GM12878 (cell line): ENCODE measurements at regions of chr1 and their contacts with region 1.

Region 1: DNA sequence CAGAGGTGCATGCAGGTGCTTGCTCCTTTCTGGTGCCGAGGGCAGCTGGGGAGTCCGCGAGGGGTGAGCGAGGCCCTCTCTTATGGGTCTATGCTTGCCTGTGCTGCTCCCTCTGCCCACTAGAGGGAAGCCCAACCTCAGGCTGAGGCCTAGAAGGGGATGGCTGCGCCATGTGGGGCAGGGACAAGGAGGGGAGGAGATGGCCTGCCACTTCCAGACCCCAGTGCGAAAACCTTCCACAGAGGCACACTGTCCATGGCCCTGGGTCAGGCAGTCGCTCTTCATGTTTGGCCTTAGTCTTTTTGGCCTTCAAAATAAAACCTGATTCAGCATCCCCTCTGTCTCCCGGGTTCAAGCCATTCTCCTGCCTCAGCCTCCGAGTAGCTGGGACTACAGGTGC is 14.0 kb downstream of the RHBG start:
- DNase-seq: no peak
- ATAC-seq: peak; percentile 98
- H3K4me3 ChIP-seq: no peak overlapping the region
- H3K27ac ChIP-seq: no peak overlapping the region
- H3K4me1 ChIP-seq: no peaks in the 10 kb centered on the region
- H3K27me3 ChIP-seq: peaks cover 2 to 5% of the 10 kb centered on the region in 2 experiments
- CTCF ChIP-seq: peak; percentile 92 to 98 (median 93)
- EP300 ChIP-seq: no peak
- POLR2A ChIP-seq: no peak
- RAD21 ChIP-seq: peak; percentile 91

Region 2: GRCh38 chr1:155844860-155845421 is 538.1 kb before region 1 on chr1:
- CTCF ChIA-PET with region 1: no interaction called
- POLR2A ChIA-PET with region 1: no interaction called
- RAD21 ChIA-PET with region 1: no interaction called
- SMC1A ChIA-PET with region 1: no interaction called
- in situ Hi-C with region 1: no loop called
- intact Hi-C with region 1: no loop called
- DNase-seq: no peak
- ATAC-seq: no peak
- H3K4me3 ChIP-seq: no peak overlapping the region
- H3K27ac ChIP-seq: no peak overlapping the region
- H3K4me1 ChIP-seq: no peaks in the 10 kb centered on the region; the same call in 1 of the 2 replicates
- H3K27me3 ChIP-seq: no peaks in the 10 kb centered on the region
- CTCF ChIP-seq: no peak
- EP300 ChIP-seq: no peak
- POLR2A ChIP-seq: no peak
- RAD21 ChIP-seq: no peak

Region 3: GRCh38 chr1:156193488-156194299 is 189.3 kb before region 1 on chr1 and contains the start of gene SLC25A44:
- CTCF ChIA-PET with region 1: no interaction called
- POLR2A ChIA-PET with region 1: no interaction called
- RAD21 ChIA-PET with region 1: no interaction called
- SMC1A ChIA-PET with region 1: no interaction called
- in situ Hi-C with region 1: no loop called
- intact Hi-C with region 1: no loop called
- DNase-seq: peak; percentile 100
- ATAC-seq: peak; percentile 96
- H3K4me3 ChIP-seq: peak within 1 kb of the TSS; percentile 100
- H3K27ac ChIP-seq: peak within 1 kb of the TSS; percentile 87
- H3K4me1 ChIP-seq: peaks cover 6% of the 10 kb centered on the region
- H3K27me3 ChIP-seq: no peaks in the 10 kb centered on the region
- CTCF ChIP-seq: peak; percentile 35 to 48 (median 45); a peak in 5 of 6 replicates
- EP300 ChIP-seq: no peak
- POLR2A ChIP-seq: peak; percentile 89
- RAD21 ChIP-seq: no peak
- polyA plus RNA-seq, gene SLC25A44: 7.1 to 9.2 TPM

Region 4: DNA sequence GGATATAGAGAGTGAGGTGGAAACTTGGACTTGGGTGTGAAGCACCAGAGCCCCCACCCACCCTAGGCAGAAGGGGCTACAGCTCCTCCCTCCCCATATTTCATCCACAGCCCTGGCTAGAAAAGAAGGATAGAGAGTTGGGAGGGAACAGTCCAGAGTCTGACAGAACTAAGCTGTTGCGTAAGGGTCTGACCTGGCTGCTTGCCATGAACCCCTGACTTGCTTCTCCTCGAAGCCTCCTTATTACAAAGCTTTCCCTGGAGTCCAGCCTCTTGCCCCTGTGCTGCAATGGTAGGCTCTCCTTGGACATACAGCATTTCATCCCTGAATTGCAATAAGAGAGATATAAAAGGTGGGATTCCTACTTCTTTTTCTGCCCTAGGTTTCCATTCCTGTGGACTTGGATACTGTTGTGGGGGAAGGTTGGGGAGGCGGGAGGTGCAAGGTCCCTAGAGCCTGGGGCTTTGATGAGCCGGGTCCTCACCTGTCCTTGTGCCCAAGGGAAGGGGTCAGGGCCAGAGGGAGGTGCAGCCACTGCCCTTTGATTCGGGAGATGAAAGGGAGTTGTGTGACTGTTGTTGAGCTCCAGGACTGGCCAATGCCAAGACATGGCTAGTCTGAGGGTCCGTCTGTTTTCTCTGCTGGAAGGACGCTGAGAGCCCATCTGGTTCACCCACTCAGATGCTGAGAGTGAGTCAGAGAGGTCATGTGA is 11.3 kb before region 1 on chr1:
- CTCF ChIA-PET with region 1: interaction called, 19 read pairs
- POLR2A ChIA-PET with region 1: interaction called, 4 read pairs
- RAD21 ChIA-PET with region 1: no interaction called
- SMC1A ChIA-PET with region 1: interaction called, 8 read pairs
- in situ Hi-C with region 1: no loop called
- intact Hi-C with region 1: no loop called
- DNase-seq: no peak
- ATAC-seq: no peak
- H3K4me3 ChIP-seq: no peak overlapping the region
- H3K27ac ChIP-seq: no peak overlapping the region
- H3K4me1 ChIP-seq: no peaks in the 10 kb centered on the region
- H3K27me3 ChIP-seq: peaks cover 3 to 10% of the 10 kb centered on the region in 2 experiments; a peak in 3 of 4 replicates
- CTCF ChIP-seq: no peak
- EP300 ChIP-seq: no peak
- POLR2A ChIP-seq: no peak
- RAD21 ChIP-seq: no peak

Region 5: GRCh38 chr1:156409439-156409838 is 26.4 kb after region 1 on chr1:
- CTCF ChIA-PET with region 1: interaction called, 13 read pairs
- POLR2A ChIA-PET with region 1: no interaction called
- RAD21 ChIA-PET with region 1: interaction called, 3 read pairs
- SMC1A ChIA-PET with region 1: interaction called, 11 read pairs
- in situ Hi-C with region 1: no loop called
- intact Hi-C with region 1: no loop called
- DNase-seq: no peak
- ATAC-seq: no peak
- H3K4me3 ChIP-seq: no peak overlapping the region
- H3K27ac ChIP-seq: no peak overlapping the region
- H3K4me1 ChIP-seq: no peaks in the 10 kb centered on the region
- H3K27me3 ChIP-seq: peaks cover 0 to 3% of the 10 kb centered on the region in 2 experiments; a peak in 1 of 4 replicates
- CTCF ChIP-seq: no peak
- EP300 ChIP-seq: no peak
- POLR2A ChIP-seq: no peak
- RAD21 ChIP-seq: no peak

Region 6: DNA sequence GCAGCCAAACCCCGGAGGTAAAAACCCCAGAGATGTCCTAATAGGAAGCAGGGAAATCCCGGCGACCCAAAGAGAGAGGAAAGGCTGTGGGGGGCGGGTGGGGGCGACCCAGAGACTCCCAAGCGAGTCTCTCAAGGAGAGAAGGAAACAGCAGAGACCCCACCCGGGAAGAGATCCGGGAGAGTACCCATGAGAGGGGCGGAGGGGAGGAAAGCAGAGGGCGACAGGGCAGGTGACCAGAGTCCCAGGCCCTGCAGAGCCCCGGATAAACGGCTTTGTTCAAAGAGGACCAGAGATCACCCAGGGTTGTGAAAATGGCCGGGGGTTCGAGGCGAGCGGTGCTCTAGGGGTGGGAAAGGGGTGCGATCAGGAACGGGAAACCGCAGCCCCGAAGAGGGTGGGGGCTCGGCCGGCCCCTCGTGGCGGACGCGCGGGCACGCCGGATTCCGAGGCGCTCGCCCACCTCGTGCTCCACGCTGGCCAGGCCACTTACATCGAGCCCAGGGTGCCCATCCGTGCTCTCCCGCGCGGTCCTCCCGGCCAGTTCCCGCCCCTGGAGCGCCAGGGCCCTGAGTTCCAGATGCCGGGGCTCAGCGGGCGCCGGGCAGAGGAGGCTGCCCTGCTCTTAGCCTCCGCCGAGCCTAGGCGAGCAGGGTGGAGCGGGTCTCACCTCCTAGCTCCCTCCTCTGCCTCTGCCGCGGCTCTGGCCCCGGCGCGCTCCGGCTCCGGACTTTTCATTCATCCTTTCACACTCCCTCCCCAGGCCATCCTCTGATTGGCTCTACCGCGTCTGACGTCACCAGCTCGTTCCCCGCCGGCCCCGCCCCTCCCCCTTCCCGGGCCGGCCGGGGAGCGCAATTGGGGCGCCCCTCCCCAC is 38.3 kb after region 1 on chr1:
- CTCF ChIA-PET with region 1: interaction called, 26 read pairs
- POLR2A ChIA-PET with region 1: no interaction called
- RAD21 ChIA-PET with region 1: interaction called, 21 read pairs
- SMC1A ChIA-PET with region 1: interaction called, 23 read pairs
- in situ Hi-C with region 1: no loop called
- intact Hi-C with region 1: no loop called
- DNase-seq: peak; percentile 39
- ATAC-seq: peak; percentile 88
- H3K4me3 ChIP-seq: peak overlapping the region; percentile 75
- H3K27ac ChIP-seq: peak overlapping the region; percentile 33; the same call in 1 of the 2 replicates
- H3K4me1 ChIP-seq: peaks cover 8% of the 10 kb centered on the region
- H3K27me3 ChIP-seq: peaks cover 6 to 13% of the 10 kb centered on the region in 2 experiments
- CTCF ChIP-seq: no peak
- EP300 ChIP-seq: no peak
- POLR2A ChIP-seq: peak; percentile 82
- RAD21 ChIP-seq: no peak

Region 7: DNA sequence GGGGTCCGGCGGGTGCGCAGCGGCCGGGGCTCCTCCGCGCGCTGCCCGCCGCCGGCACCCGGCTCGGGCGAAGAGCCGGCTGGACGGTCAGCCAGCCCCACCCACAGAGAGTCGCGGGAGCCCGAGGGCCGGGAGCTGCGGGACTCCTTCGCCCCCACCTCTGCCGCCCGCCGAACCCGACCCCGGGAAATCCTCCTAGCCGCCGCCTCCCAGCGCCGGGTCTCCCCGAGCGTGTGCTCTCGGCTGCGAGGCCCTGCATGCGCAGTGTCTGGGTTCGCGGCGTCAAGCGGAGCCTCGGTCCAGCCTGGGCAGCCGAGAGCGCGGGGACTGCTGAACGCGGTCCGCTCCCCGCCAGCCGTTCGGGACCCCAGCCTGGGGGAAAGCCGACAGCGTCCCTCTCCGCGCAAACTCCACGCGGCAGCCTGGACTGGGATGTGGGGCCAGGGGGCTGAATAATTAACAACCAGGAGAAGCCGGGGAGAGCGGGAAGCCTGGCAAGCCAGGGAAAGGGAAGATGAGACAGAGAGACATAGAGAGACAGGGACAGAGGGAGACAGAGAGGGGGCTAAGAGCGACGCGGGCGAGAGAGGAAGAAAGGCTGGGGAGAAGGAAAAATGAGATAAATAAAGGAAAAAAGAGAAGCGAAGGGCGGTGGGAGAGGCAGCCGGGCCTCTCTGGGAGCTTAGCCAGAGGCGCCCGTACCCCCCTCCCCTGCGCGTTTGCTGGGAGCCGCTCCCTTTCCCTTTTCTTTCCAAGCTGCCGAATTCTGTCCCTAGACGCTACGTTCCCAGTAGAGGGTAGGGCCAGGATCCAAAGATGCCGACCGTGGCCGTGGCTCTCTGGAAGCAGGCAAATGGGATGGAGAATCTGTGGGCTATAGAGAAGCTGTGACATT is 53.4 kb after region 1 on chr1:
- CTCF ChIA-PET with region 1: interaction called, 468 read pairs
- POLR2A ChIA-PET with region 1: interaction called, 3 read pairs
- RAD21 ChIA-PET with region 1: interaction called, 50 read pairs
- SMC1A ChIA-PET with region 1: interaction called, 63 read pairs
- in situ Hi-C with region 1: loop called (anchors 5 kb)
- intact Hi-C with region 1: no loop called
- DNase-seq: no peak
- ATAC-seq: no peak
- H3K4me3 ChIP-seq: peak overlapping the region; percentile 48; the same call in 1 of the 2 replicates
- H3K27ac ChIP-seq: no peak overlapping the region
- H3K4me1 ChIP-seq: no peaks in the 10 kb centered on the region; the same call in none of the 2 replicates
- H3K27me3 ChIP-seq: peaks cover 36 to 67% of the 10 kb centered on the region in 2 experiments
- CTCF ChIP-seq: no peak
- EP300 ChIP-seq: no peak
- POLR2A ChIP-seq: no peak
- RAD21 ChIP-seq: no peak

Region 8: GRCh38 chr1:156534424-156535060 is 151.5 kb after region 1 on chr1:
- CTCF ChIA-PET with region 1: no interaction called
- POLR2A ChIA-PET with region 1: no interaction called
- RAD21 ChIA-PET with region 1: no interaction called
- SMC1A ChIA-PET with region 1: no interaction called
- in situ Hi-C with region 1: no loop called
- intact Hi-C with region 1: no loop called
- DNase-seq: no peak
- ATAC-seq: no peak
- H3K4me3 ChIP-seq: no peak overlapping the region
- H3K27ac ChIP-seq: no peak overlapping the region
- H3K4me1 ChIP-seq: no peaks in the 10 kb centered on the region
- H3K27me3 ChIP-seq: no peaks in the 10 kb centered on the region
- CTCF ChIP-seq: no peak
- EP300 ChIP-seq: no peak
- POLR2A ChIP-seq: no peak
- RAD21 ChIP-seq: no peak

Region 9: GRCh38 chr1:156608036-156608674 is 225.1 kb after region 1 on chr1:
- CTCF ChIA-PET with region 1: interaction called, 23 read pairs
- POLR2A ChIA-PET with region 1: interaction called, 4 read pairs
- RAD21 ChIA-PET with region 1: interaction called, 7 read pairs
- SMC1A ChIA-PET with region 1: interaction called, 11 read pairs
- in situ Hi-C with region 1: loop called (anchors 5 kb)
- intact Hi-C with region 1: loop called (anchors 2 kb)
- DNase-seq: peak; percentile 62
- ATAC-seq: peak; percentile 99
- H3K4me3 ChIP-seq: no peak overlapping the region
- H3K27ac ChIP-seq: no peak overlapping the region
- H3K4me1 ChIP-seq: 0 out of 2 replicates have a peak, but pooled peaks cover 4% of the 10 kb centered on the region
- H3K27me3 ChIP-seq: peaks cover 0 to 3% of the 10 kb centered on the region in 2 experiments; a peak in 2 of 4 replicates
- CTCF ChIP-seq: peak; percentile 75 to 93 (median 78)
- EP300 ChIP-seq: no peak
- POLR2A ChIP-seq: no peak
- RAD21 ChIP-seq: peak; percentile 80